Activated naive CD4-positive, alpha-beta T cell treated with anti-CD3 and anti-CD28 coated beads for 36 hours (primary cell): ENCODE measurements at regions of chr6 and their contacts with region 1.

Region 1: GRCh38 chr6:137415127-137415833 is 78.9 kb downstream of the OLIG3 start:
- DNase-seq: peak; percentile 80
- H3K4me3 Mint-ChIP-seq: peak overlapping the region; percentile 65
- H3K27ac Mint-ChIP-seq: no peak overlapping the region
- H3K4me1 Mint-ChIP-seq: peaks cover 11% of the 10 kb centered on the region
- H3K27me3 Mint-ChIP-seq: no peaks in the 10 kb centered on the region

Region 2: DNA sequence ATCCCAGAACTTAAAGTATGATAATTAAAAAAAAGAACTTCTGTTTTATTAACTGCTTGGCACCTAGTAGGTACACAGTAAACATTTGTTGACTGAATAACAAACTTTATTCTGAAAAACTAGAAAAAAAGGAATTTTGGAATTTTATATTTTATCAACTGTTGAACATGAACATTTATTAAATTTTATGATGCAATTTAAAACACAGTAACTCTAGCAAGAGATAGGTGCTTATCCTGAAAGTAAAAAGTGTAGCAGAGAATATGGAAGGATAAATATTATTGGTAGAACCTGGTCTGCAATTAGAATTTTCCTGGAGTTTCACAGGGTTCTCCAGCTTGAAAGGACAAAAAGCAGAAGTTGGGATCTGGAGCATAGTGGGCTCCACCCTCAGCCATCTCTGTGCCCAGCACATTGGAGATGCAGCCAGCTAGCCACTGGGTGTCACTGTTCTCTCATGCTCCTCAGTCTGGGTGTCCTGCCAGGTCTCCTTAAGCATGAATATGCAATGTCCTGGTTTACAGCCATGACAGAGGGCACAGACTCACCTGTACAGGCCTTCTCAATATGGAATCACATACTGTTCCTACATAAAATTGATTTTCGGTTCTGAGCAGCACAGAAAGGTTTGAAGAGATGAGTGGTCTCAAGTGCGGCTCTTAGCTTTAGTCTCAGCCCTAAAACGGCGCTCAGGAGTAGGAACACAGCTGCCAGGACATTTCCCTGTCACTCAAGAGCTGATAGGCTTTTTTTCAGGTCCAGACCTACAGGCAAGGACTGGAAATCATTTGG is 338.8 kb before region 1 on chr6:
- CTCF ChIA-PET with region 1: no interaction called
- intact Hi-C with region 1: loop called (anchors 1 kb)
- DNase-seq: peak; percentile 79
- H3K4me3 Mint-ChIP-seq: no peak overlapping the region
- H3K27ac Mint-ChIP-seq: no peak overlapping the region
- H3K4me1 Mint-ChIP-seq: no peaks in the 10 kb centered on the region
- H3K27me3 Mint-ChIP-seq: peaks cover 20% of the 10 kb centered on the region

Region 3: DNA sequence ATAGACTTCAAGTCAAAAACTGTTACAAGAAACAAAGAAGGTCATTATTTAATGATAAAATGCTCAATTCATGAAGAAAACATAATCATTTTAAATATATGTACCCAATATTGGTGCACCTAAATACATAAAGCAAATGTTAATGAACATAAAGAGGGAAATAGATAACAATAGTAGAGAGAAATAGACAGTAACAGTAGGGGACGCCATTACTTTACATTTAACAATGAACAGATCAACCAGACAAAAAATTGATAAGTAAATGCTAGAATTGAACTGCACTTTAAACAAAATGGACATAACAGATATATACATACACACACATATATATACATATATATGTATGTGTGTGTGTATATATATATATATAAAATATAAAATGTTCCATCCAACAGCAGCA is 279.2 kb before region 1 on chr6:
- CTCF ChIA-PET with region 1: interaction called, 3 read pairs
- intact Hi-C with region 1: loop called (anchors 1 kb)
- DNase-seq: no peak
- H3K4me3 Mint-ChIP-seq: no peak overlapping the region
- H3K27ac Mint-ChIP-seq: no peak overlapping the region
- H3K4me1 Mint-ChIP-seq: no peaks in the 10 kb centered on the region
- H3K27me3 Mint-ChIP-seq: peaks cover 5% of the 10 kb centered on the region

Region 4: DNA sequence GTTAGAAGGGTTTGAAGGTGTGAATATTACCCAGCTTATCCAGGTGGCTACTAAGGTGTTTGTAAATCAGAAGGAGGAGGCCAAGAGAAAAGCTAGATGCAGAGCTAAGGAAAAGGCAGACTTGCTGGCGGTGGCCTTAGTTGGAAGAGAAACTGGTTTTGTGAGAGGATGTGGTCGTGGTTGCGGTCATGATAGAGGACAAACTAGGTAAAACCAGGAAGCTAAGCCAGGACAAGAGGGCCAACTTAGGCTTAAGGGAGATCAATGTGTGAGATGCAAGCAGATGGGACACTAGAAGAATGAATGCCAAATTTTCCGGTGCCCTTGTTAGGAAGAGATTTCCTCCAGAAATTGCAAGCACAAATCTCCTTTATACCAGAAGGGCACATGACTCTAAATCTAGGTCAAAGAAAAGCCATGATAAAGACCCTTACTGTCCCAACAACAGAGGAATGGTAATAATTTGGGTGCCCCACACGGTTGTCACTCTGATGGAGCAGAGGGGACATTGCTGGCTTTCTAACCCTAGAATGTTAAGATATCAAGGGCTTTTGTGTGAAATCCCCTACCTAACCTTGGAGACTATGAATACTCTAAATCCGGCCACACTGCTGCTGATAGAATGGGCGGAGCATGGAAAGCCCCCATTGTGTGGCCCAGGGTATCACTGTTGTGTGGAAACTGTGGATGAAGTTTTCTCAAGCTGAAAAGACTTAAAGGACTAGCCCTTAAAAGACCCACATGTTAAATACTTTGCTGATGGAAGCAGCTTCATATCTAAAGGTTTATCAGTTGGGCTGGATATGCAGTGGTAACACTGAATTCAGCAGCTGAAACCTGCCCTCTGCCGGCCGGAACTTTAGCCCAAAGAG is 249.7 kb before region 1 on chr6:
- CTCF ChIA-PET with region 1: no interaction called
- intact Hi-C with region 1: no loop called
- DNase-seq: peak; percentile 64
- H3K4me3 Mint-ChIP-seq: no peak overlapping the region
- H3K27ac Mint-ChIP-seq: no peak overlapping the region
- H3K4me1 Mint-ChIP-seq: peaks cover 27% of the 10 kb centered on the region
- H3K27me3 Mint-ChIP-seq: peaks cover 13% of the 10 kb centered on the region

Region 5: GRCh38 chr6:137341681-137342195 is 73.5 kb before region 1 on chr6:
- CTCF ChIA-PET with region 1: interaction called, 22 read pairs
- intact Hi-C with region 1: loop called (anchors 1 kb)
- DNase-seq: peak; percentile 69
- H3K4me3 Mint-ChIP-seq: peak overlapping the region; percentile 12
- H3K27ac Mint-ChIP-seq: no peak overlapping the region
- H3K4me1 Mint-ChIP-seq: peaks cover 7% of the 10 kb centered on the region
- H3K27me3 Mint-ChIP-seq: no peaks in the 10 kb centered on the region

Region 6: GRCh38 chr6:137369136-137369535 is 46.1 kb before region 1 on chr6:
- CTCF ChIA-PET with region 1: no interaction called
- intact Hi-C with region 1: no loop called
- DNase-seq: no peak
- H3K4me3 Mint-ChIP-seq: no peak overlapping the region
- H3K27ac Mint-ChIP-seq: no peak overlapping the region
- H3K4me1 Mint-ChIP-seq: peaks cover 4% of the 10 kb centered on the region
- H3K27me3 Mint-ChIP-seq: no peaks in the 10 kb centered on the region

Region 7: GRCh38 chr6:137389150-137389704 is 26.1 kb before region 1 on chr6:
- CTCF ChIA-PET with region 1: no interaction called
- intact Hi-C with region 1: loop called (anchors 1 kb)
- DNase-seq: peak; percentile 93
- H3K4me3 Mint-ChIP-seq: no peak overlapping the region
- H3K27ac Mint-ChIP-seq: peak overlapping the region; percentile 10
- H3K4me1 Mint-ChIP-seq: peaks cover 36% of the 10 kb centered on the region
- H3K27me3 Mint-ChIP-seq: no peaks in the 10 kb centered on the region